Activated CD8-positive, alpha-beta T cell treated with anti-CD3 and anti-CD28 coated beads, Interleukin-2, amount 10 ng/mL, durations not matched to agents 7 days and 5 days (primary cell): ENCODE measurements at regions of chr1 and their contacts with region 1.

Region 1: DNA sequence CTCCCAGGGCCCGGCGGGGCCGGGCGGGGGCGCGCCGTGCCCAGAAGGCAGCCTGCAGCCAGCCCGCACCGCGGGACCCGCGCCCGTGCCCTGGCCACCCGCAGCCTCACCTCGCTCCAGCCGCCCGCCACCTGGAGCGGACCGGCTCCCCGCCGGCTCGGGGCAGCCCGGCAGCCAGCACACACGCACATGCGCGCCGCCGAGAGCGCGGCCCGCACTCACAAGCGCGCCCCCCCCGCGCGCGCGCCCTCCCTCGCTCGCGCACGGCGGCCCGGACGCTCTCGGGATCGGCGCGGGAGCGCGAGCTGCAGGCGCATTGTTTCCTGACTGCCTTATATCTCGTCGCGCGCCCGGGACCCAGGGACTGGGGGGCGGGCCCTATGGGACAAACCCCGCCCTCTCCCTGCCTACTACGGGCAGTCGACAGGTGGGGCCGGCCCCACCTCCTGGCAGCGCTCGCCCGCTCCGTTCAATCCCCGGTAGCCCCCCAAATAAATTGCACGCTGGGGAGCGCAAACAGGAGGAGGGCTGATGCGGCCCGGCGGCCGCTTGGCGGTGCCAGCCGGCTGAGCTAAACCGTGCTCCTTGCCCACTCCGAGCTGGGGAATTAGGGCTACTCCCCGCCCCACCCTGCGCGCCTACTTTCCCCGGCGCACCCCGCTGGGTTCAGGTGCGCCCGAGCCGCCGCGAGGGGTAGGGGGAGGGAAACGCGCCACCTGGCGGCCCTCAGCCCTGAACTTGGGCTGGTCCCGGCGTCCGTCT is at the start of gene MYCL:
- DNase-seq: peak; percentile 81
- ATAC-seq: peak; percentile 89
- H3K4me3 Mint-ChIP-seq: peak within 1 kb of the TSS; percentile 72
- H3K27ac Mint-ChIP-seq: no peak within 1 kb of the TSS
- H3K4me1 Mint-ChIP-seq: peaks cover 6% of the 10 kb centered on the region
- H3K27me3 Mint-ChIP-seq: peaks cover 56% of the 10 kb centered on the region
- total RNA-seq, gene MYCL: not detected

Region 2: GRCh38 chr1:39816415-39817090 is 85.3 kb before region 1 on chr1:
- CTCF ChIA-PET with region 1: interaction called, 42 read pairs
- POLR2A ChIA-PET with region 1: interaction called, 4 read pairs
- DNase-seq: peak; percentile 63
- ATAC-seq: peak; percentile 71
- H3K4me3 Mint-ChIP-seq: peak overlapping the region; percentile 44
- H3K27ac Mint-ChIP-seq: no peak overlapping the region
- H3K4me1 Mint-ChIP-seq: peaks cover 7% of the 10 kb centered on the region
- H3K27me3 Mint-ChIP-seq: peaks cover 30% of the 10 kb centered on the region

Region 3: DNA sequence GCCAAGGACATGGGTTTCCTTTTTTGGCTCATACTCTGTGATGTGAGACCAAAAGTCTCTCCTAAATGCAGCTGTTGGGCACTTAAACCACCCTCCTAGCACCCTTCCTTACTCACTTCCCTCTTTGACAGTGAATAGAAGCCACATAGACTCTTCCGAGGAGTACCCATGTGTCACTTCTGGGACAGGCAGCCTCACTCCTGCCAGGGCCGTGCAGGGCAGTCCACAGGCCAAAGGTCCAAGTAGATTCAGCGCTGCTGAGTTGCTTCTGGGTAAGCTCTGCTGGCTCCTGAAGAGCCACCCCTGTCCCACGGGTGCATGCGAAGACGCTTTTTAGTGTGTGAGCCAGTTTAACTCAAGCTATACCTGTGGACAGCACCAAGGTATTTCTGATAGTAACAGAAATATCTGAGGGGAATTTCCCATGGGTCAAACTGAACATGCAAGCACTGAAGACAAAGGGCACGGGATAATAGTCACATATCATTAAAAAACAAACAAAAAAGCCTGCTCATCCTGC is 76.4 kb before region 1 on chr1:
- CTCF ChIA-PET with region 1: interaction called, 10 read pairs
- POLR2A ChIA-PET with region 1: no interaction called
- DNase-seq: no peak
- ATAC-seq: no peak
- H3K4me3 Mint-ChIP-seq: no peak overlapping the region
- H3K27ac Mint-ChIP-seq: no peak overlapping the region
- H3K4me1 Mint-ChIP-seq: no peaks in the 10 kb centered on the region
- H3K27me3 Mint-ChIP-seq: peaks cover 29% of the 10 kb centered on the region

Region 4: DNA sequence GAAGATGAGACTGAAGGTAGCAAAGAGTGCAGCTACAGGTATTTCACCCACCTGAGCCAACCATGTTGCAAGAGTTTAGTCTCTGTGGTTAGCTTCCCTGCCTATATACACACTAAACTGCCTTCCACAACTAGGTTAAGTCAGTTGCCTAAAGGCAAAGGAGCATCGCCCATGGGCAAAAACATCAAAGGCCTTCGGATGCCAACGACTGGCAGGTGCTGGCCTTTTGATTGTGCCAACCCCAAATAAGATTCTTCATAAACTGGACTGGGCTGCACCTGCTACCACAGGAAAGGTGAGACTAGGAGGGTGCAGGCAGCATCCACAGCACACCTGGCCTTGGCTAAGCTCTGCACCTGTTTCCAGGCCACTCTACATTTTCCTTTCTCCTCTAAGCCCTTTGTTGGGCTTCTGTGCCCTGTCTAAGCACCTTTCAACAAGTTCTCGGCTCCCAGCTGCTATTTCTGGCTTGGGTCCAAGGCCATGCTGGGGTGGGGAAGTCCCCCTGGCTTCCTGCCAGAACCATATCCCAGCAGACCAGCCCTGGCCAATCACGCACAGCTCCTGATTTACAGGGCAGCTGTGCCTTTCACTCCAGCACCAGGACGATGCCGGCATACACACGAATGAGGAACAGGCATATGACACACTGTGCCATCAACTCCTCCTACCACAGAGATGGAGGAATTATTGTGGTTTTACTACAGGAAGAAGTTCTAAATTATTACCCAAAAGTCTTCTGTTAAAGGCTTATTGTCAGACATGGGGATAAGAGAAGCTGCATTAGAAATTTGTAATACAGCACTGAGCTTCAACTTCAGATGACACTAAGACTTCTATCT is 56.4 kb before region 1 on chr1:
- CTCF ChIA-PET with region 1: interaction called, 15 read pairs
- POLR2A ChIA-PET with region 1: no interaction called
- DNase-seq: peak; percentile 63
- ATAC-seq: peak; percentile 86
- H3K4me3 Mint-ChIP-seq: no peak overlapping the region
- H3K27ac Mint-ChIP-seq: peak overlapping the region; percentile 73
- H3K4me1 Mint-ChIP-seq: peaks cover 38% of the 10 kb centered on the region
- H3K27me3 Mint-ChIP-seq: no peaks in the 10 kb centered on the region

Region 5: GRCh38 chr1:39852214-39852791 is 49.6 kb before region 1 on chr1:
- CTCF ChIA-PET with region 1: interaction called, 10 read pairs
- POLR2A ChIA-PET with region 1: no interaction called
- DNase-seq: no peak
- ATAC-seq: no peak
- H3K4me3 Mint-ChIP-seq: no peak overlapping the region
- H3K27ac Mint-ChIP-seq: no peak overlapping the region
- H3K4me1 Mint-ChIP-seq: peaks cover 5% of the 10 kb centered on the region
- H3K27me3 Mint-ChIP-seq: no peaks in the 10 kb centered on the region

Region 6: DNA sequence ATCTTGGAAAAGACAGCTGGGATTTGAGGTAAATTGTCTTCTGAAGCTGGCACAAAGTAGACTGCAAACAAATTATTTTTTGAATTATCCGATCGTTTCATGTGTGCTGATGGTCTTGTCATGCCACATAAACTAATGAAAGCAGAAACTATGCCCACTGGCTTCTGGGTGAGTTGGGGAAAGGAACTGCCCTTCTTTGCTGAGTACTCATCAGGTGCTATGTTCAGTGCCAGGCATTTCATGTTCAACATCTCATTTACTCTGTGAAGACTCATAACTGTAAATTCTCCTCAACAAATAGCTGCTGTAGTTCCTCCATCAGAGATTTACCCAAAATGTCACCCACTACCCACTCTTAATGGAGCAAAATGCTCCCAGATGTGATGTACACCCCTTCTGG is 19.7 kb before region 1 on chr1:
- CTCF ChIA-PET with region 1: interaction called, 11 read pairs
- POLR2A ChIA-PET with region 1: no interaction called
- DNase-seq: no peak
- ATAC-seq: no peak
- H3K4me3 Mint-ChIP-seq: peak overlapping the region; percentile 95
- H3K27ac Mint-ChIP-seq: no peak overlapping the region
- H3K4me1 Mint-ChIP-seq: peaks cover 28% of the 10 kb centered on the region
- H3K27me3 Mint-ChIP-seq: no peaks in the 10 kb centered on the region